ENCODE measurements at regions of chr15 and their contacts with region 1.

Region 1: DNA sequence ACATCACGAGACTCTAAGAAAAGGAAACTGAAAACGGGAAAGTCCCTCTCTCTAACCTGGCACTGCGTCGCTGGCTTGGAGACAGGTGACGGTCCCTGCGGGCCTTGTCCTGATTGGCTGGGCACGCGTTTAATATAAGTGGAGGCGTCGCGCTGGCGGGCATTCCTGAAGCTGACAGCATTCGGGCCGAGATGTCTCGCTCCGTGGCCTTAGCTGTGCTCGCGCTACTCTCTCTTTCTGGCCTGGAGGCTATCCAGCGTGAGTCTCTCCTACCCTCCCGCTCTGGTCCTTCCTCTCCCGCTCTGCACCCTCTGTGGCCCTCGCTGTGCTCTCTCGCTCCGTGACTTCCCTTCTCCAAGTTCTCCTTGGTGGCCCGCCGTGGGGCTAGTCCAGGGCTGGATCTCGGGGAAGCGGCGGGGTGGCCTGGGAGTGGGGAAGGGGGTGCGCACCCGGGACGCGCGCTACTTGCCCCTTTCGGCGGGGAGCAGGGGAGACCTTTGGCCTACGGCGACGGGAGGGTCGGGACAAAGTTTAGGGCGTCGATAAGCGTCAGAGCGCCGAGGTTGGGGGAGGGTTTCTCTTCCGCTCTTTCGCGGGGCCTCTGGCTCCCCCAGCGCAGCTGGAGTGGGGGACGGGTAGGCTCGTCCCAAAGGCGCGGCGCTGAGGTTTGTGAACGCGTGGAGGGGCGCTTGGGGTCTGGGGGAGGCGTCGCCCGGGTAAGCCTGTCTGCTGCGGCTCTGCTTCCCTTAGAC is at the start of gene B2M:
- DNase-seq: peak; percentile 96
- H3K4me3 Mint-ChIP-seq: peak within 1 kb of the TSS; percentile 98
- H3K27ac Mint-ChIP-seq: peak within 1 kb of the TSS; percentile 99
- H3K4me1 Mint-ChIP-seq: peaks cover 39% of the 10 kb centered on the region
- H3K27me3 Mint-ChIP-seq: no peaks in the 10 kb centered on the region
- total RNA-seq, gene B2M: 9,723 to 9,975 TPM

Region 2: DNA sequence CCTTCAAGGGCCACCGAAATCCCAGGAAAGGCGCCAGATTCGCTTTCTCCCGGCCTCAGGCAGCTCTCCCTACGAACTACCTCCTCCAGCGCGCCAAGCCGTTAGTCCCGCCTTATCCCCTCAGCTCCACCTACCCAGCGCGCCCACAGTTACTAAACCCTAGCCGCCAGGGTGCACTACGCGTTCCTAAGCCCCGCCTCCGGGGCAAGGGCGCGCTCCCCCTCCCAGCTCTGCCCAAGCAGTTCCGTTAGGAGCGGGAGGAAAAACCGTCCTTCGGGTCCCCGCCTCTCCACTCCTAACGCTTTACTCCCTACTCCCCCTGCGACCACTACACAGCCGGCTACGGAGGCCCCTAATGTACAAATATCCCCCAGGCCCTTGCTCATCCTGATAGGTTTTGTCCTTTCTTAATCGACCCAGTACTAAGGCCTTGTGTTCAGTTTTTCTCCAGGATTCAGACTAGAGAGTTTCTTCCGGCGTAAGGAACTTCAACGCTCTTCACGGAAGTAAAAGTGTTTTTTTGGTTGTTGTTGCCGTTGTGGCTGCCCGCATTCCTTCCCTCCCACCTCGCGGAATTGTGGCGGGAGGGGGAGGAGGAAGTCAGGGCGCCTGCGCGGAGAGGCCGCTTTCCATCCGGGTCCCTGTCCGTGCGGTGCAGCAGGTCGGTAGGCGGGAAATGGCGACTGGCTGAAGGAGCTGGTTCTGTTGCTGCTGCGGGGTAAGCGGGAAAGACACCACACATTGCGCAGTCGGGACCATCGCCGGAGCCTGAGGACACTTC is 284.4 kb before region 1 on chr15 and contains the start of gene CTDSPL2:
- CTCF ChIA-PET with region 1: interaction called, 3 read pairs
- POLR2A ChIA-PET with region 1: interaction called, 19 read pairs
- DNase-seq: peak; percentile 95
- H3K4me3 Mint-ChIP-seq: peak within 1 kb of the TSS; percentile 91
- H3K27ac Mint-ChIP-seq: peak within 1 kb of the TSS; percentile 94
- H3K4me1 Mint-ChIP-seq: peaks cover 44% of the 10 kb centered on the region
- H3K27me3 Mint-ChIP-seq: no peaks in the 10 kb centered on the region
- total RNA-seq, gene CTDSPL2: 64.9 to 66.7 TPM

Region 3: DNA sequence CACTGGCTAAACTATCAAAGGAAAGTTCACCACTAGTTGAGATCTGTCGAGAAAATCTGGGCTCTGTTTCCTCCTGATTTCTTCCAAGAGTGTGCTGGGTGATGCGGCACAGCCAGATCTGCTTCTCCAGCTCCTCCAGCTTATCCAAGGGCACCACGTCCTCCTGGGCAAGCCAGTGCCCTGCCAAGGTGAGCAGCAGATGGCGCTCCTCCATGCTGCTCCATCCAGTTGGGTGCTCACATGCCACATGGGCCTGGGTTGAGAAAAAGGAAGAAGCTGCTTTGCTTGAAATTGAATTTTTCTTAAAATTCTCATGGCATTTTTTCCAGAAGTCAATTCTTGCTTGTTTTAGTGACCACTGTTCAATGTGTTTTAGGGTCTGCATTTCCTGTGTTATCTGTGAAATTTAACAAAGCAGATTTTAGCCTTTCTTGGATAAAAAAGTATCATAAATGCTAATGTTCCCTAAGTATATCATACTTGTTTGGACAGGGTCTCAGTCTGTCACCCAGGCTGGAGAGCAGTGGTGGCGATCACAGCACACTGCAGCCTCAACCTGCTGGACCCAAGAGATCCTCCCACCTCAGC is 127.3 kb before region 1 on chr15:
- CTCF ChIA-PET with region 1: interaction called, 6 read pairs
- POLR2A ChIA-PET with region 1: interaction called, 18 read pairs
- DNase-seq: peak; percentile 70
- H3K4me3 Mint-ChIP-seq: no peak overlapping the region
- H3K27ac Mint-ChIP-seq: no peak overlapping the region
- H3K4me1 Mint-ChIP-seq: peaks cover 14% of the 10 kb centered on the region
- H3K27me3 Mint-ChIP-seq: no peaks in the 10 kb centered on the region

Region 4: DNA sequence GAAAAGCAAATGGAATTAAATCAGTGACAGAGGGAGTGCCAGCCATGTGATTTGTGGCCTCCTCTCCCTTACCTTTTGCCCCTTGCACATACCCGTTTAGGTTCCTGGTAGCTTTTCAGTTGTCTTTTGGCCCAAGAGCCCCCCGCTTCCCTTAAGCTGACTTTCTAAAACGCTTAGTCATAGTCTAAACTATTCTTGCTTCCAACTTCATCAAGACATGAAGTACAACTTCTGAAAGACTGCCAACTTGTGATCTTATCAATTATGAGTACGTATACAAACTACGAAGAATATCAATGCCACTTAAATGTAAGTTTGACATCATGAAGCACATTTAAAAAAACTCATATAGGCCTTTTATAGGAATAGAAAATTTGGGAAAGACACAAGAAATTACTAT is 112.6 kb before region 1 on chr15:
- CTCF ChIA-PET with region 1: interaction called, 8 read pairs
- POLR2A ChIA-PET with region 1: interaction called, 49 read pairs
- DNase-seq: no peak
- H3K4me3 Mint-ChIP-seq: no peak overlapping the region
- H3K27ac Mint-ChIP-seq: peak overlapping the region; percentile 77
- H3K4me1 Mint-ChIP-seq: peaks cover 38% of the 10 kb centered on the region
- H3K27me3 Mint-ChIP-seq: no peaks in the 10 kb centered on the region

Region 5: DNA sequence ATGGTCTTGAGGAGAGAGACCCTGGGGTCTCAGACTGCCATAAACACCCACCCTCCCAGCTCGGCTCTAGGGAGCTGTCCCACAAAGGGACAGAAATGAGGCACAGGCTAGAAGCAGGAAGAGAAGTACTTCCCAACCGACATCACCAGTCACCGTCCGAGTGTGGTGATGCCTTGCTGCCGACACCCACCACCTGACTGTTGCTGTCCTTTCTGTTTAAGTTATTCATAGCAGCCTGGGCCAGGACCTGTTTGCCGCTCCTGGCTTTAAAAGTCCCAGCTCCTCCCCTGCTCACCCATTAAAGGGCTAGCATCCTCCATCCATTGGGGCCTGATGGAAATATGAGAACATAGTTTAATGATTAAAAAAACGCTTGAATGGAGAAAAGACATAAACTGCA is 34.9 kb before region 1 on chr15:
- CTCF ChIA-PET with region 1: interaction called, 24 read pairs
- POLR2A ChIA-PET with region 1: interaction called, 4,153 read pairs
- DNase-seq: peak; percentile 63
- H3K4me3 Mint-ChIP-seq: peak overlapping the region; percentile 65
- H3K27ac Mint-ChIP-seq: peak overlapping the region; percentile 94
- H3K4me1 Mint-ChIP-seq: peaks cover 76% of the 10 kb centered on the region
- H3K27me3 Mint-ChIP-seq: no peaks in the 10 kb centered on the region

Region 6: GRCh38 chr15:44698641-44699040 is 12.9 kb before region 1 on chr15:
- CTCF ChIA-PET with region 1: no interaction called
- POLR2A ChIA-PET with region 1: interaction called, 4,153 read pairs
- DNase-seq: no peak
- H3K4me3 Mint-ChIP-seq: no peak overlapping the region
- H3K27ac Mint-ChIP-seq: no peak overlapping the region
- H3K4me1 Mint-ChIP-seq: peaks cover 25% of the 10 kb centered on the region
- H3K27me3 Mint-ChIP-seq: peaks cover 15% of the 10 kb centered on the region

Region 7: DNA sequence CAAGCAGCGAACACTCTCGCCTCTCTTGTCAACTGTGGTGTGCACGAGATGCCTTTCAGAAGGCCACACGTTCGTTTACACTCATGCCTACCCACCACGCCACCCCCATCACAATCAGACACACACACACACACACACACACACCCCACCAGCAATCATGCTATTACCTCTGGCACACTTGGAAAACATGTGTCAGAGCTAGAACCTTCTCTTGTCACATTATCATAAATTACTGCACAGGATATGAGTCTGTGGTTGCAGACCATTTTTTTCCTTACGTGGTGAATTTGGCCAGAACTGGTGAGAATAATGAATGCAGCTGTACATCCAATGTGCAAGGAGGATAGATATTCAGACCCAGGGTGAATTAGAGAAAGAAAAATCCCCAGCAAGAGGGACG is 77.2 kb after region 1 on chr15:
- CTCF ChIA-PET with region 1: no interaction called
- POLR2A ChIA-PET with region 1: interaction called, 21 read pairs
- DNase-seq: peak; percentile 37
- H3K4me3 Mint-ChIP-seq: no peak overlapping the region
- H3K27ac Mint-ChIP-seq: peak overlapping the region; percentile 49
- H3K4me1 Mint-ChIP-seq: peaks cover 20% of the 10 kb centered on the region
- H3K27me3 Mint-ChIP-seq: no peaks in the 10 kb centered on the region

Region 8: DNA sequence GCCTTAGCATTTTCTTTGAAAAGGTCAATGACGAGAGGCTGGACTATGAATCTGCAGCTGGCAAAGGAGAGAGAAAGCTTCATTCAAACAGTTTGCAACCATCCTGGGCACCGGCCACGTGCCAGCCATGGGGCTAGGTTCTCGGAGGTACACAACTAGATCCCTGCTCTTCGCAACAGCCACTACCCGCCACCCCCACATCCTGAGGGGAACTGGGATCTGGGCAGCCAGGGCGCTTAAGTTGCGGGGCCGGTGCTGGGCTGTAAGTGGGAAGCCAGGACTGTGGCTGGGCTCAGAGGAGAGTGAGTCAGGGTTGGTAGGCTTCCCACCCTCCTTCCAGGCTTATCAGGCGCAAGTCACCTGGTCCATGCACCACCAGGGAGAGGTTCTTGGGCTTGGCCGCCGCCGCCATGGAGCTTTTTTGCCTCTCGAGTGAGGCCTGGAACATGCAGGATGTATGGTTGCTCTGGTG is 149.9 kb after region 1 on chr15:
- CTCF ChIA-PET with region 1: no interaction called
- POLR2A ChIA-PET with region 1: no interaction called
- DNase-seq: no peak
- H3K4me3 Mint-ChIP-seq: no peak overlapping the region
- H3K27ac Mint-ChIP-seq: no peak overlapping the region
- H3K4me1 Mint-ChIP-seq: no peaks in the 10 kb centered on the region
- H3K27me3 Mint-ChIP-seq: no peaks in the 10 kb centered on the region